Naive thymus-derived CD4-positive, alpha-beta T cell (primary cell): ENCODE measurements at regions of chr10 and their contacts with region 1.

Region 1: GRCh38 chr10:178208-178607 is 43.0 kb downstream of the ZMYND11 start:
- DNase-seq: peak in 4 of 9 donors; percentile 2 to 11 (median 8)
- ATAC-seq: peak; percentile 34
- H3K4me3 ChIP-seq: no peak overlapping the region
- H3K4me3 Mint-ChIP-seq: no peak overlapping the region
- H3K27ac ChIP-seq: no peak overlapping the region
- H3K27ac Mint-ChIP-seq: peak overlapping the region in 1 of 9 donors; percentile 56
- H3K4me1 ChIP-seq: no peaks in the 10 kb centered on the region
- H3K4me1 Mint-ChIP-seq: peaks cover 0 to 34% (median 15%) of the 10 kb centered on the region in 7 donors
- H3K27me3 ChIP-seq: no peaks in the 10 kb centered on the region
- H3K27me3 Mint-ChIP-seq: no peaks in the 10 kb centered on the region

Region 2: GRCh38 chr10:127612-128432 is 50.4 kb before region 1 on chr10:
- CTCF ChIA-PET with region 1: no interaction called
- POLR2A ChIA-PET with region 1: interaction called, 6 read pairs
- intact Hi-C with region 1: loop called in 1 of 2 experiments (anchors 2 kb)
- DNase-seq: peak in 7 of 9 donors; percentile 16 to 51 (median 44)
- ATAC-seq: peak; percentile 83
- H3K4me3 ChIP-seq: peak overlapping the region; percentile 77
- H3K4me3 Mint-ChIP-seq: peak overlapping the region; percentile 72 to 91 (median 89)
- H3K27ac ChIP-seq: peak overlapping the region; percentile 68
- H3K27ac Mint-ChIP-seq: peak overlapping the region; percentile 57 to 92 (median 85)
- H3K4me1 ChIP-seq: peaks cover 0 to 5% of the 10 kb centered on the region in 2 donors
- H3K4me1 Mint-ChIP-seq: peaks cover 13 to 26% (median 18%) of the 10 kb centered on the region in 7 donors
- H3K27me3 ChIP-seq: no peaks in the 10 kb centered on the region
- H3K27me3 Mint-ChIP-seq: peaks cover 7 to 11% (median 8%) of the 10 kb centered on the region in 5 donors

Region 3: GRCh38 chr10:511101-511848 is 333.1 kb after region 1 on chr10:
- CTCF ChIA-PET with region 1: no interaction called
- POLR2A ChIA-PET with region 1: no interaction called
- intact Hi-C with region 1: loop called in 1 of 2 experiments (anchors 5 kb)
- DNase-seq: peak; percentile 55 to 88 (median 71)
- ATAC-seq: peak; percentile 85
- H3K4me3 ChIP-seq: no peak overlapping the region
- H3K4me3 Mint-ChIP-seq: peak overlapping the region in 6 of 10 donors; percentile 1 to 41 (median 23)
- H3K27ac ChIP-seq: no peak overlapping the region
- H3K27ac Mint-ChIP-seq: peak overlapping the region in 4 of 9 donors; percentile 9 to 89 (median 64)
- H3K4me1 ChIP-seq: no peaks in the 10 kb centered on the region
- H3K4me1 Mint-ChIP-seq: peaks cover 7 to 30% (median 13%) of the 10 kb centered on the region in 7 donors
- H3K27me3 ChIP-seq: no peaks in the 10 kb centered on the region
- H3K27me3 Mint-ChIP-seq: peaks cover 0 to 9% (median 4%) of the 10 kb centered on the region in 5 donors